Tibial artery (tissue), 4 donors: ENCODE measurements at regions of chr12 and their contacts with region 1.

Region 1: GRCh38 chr12:5003020-5003666 is 40.5 kb upstream of the KCNA5 start:
- DNase-seq: peak; percentile 49 to 73
- H3K4me3 ChIP-seq: no peak overlapping the region
- H3K27ac ChIP-seq: no peak overlapping the region
- H3K4me1 ChIP-seq: peaks cover 0 to 4% (median 3%) of the 10 kb centered on the region in 4 donors
- H3K27me3 ChIP-seq: peaks cover 0 to 2% of the 10 kb centered on the region in 2 donors
- CTCF ChIP-seq: peak; percentile 95 to 96

Region 2: GRCh38 chr12:3453990-3454675 is 1549.0 kb before region 1 on chr12:
- intact Hi-C with region 1: no loop called
- DNase-seq: peak in 1 of 2 donors; percentile 47
- H3K4me3 ChIP-seq: no peak overlapping the region
- H3K27ac ChIP-seq: no peak overlapping the region
- H3K4me1 ChIP-seq: no peaks in the 10 kb centered on the region
- H3K27me3 ChIP-seq: peaks cover 0 to 40% of the 10 kb centered on the region in 2 donors
- CTCF ChIP-seq: no peak

Region 3: DNA sequence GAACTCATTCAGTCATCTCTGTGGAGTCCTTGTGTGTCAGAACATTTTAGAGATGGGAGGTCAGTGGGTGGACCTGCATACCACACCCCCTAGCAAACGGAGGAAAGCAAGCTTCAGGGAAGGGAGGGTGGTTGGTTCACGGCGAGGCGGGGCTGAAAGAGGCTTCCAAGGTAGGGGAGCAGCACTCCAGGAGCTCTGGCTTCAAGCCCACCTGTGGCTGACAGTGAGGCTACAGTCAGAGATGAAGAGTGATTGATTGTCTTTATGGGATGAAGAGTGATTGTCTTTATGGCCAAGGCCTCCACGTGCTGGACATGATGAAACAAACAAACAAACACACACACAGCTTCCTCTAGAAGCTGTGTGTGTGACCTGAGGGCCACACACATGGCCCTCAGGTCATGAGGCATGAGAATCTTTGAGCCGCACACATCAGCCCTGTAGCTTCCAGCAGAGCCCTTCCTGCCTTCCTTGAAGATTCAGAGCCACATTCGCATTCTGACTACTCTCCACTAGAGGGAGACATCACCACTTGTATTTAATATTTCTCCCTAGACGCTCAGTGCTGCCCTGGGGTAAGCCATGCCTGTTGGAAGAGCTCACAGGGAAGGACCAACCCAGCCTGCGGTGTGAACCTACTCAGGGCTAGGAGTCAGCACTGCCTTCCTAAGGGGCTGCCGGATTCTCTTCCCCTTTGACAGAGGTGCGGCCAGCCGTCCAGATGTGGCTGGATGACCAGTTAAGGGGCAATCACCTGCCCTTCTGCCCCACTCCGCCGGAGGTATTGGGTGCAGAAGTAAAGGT is 147.8 kb before region 1 on chr12:
- intact Hi-C with region 1: loop called (anchors 2 kb)
- DNase-seq: peak in 1 of 2 donors; percentile 65
- H3K4me3 ChIP-seq: no peak overlapping the region
- H3K27ac ChIP-seq: no peak overlapping the region
- H3K4me1 ChIP-seq: peaks cover 0 to 14% (median 11%) of the 10 kb centered on the region in 4 donors
- H3K27me3 ChIP-seq: no peaks in the 10 kb centered on the region
- CTCF ChIP-seq: peak; percentile 74 to 83